ENCODE measurements at regions of chr12 and their contacts with region 1.

Region 1: GRCh38 chr12:89648211-89648930 is 60.3 kb downstream of the ATP2B1 start:
- DNase-seq: no peak
- ATAC-seq: no peak
- H3K4me3 Mint-ChIP-seq: no peak overlapping the region
- H3K27ac Mint-ChIP-seq: no peak overlapping the region
- H3K4me1 Mint-ChIP-seq: peaks cover 33% of the 10 kb centered on the region
- H3K27me3 Mint-ChIP-seq: no peaks in the 10 kb centered on the region

Region 2: DNA sequence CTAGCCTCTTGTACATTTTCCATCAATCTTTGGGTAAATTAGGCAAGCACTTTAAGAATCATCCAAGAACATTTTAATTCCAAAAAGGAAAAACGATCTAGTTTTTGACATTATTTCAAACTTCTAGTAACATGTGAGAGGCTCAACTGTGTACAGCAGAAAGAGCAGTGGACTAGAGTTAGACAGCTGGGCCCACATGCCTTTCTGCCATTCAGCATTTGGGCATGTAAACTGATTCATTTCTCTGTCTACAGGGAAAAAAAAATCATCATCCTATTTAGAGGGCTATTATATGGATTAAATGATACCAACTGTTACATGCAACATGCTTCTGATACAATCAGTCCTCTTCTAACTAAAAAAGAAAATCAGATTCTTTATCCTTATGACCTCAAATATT is 42.6 kb after region 1 on chr12:
- CTCF ChIA-PET with region 1: no interaction called
- POLR2A ChIA-PET with region 1: no interaction called
- intact Hi-C with region 1: no loop called
- DNase-seq: no peak
- ATAC-seq: no peak
- H3K4me3 Mint-ChIP-seq: no peak overlapping the region
- H3K27ac Mint-ChIP-seq: no peak overlapping the region
- H3K4me1 Mint-ChIP-seq: peaks cover 56% of the 10 kb centered on the region
- H3K27me3 Mint-ChIP-seq: no peaks in the 10 kb centered on the region

Region 3: DNA sequence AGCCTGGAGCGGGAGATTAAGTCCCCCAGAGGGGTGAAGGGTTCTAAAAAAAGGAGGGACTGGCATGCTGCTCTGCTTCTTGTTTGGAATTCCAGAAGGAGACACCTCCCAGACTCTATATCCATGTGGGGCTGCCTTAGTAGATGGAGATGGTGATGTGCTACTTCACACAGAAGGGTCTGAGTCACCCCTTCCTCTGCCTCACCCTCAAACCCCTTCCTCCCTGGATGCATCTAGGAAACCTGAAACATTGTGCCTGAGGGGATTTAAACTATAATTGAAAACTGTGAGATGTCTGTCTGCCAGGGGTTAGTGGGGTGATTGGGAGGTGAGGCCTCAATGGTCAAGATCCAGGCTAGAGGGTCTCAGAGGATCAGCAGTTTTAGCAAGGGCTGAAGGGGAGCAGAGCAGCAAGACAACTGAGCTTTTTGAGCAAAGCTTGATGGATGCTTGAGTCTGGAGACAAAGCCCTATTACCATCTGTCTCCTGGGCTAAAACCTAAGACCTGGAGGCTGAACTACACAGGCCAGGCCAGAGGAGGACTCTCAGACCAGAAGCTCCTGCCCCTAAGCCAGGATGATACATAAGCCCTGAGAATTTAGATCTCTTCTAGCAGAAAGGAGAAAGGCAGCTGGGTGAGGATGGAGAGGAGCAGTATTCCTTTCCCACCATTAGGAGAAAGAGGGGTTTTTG is 375.0 kb after region 1 on chr12:
- CTCF ChIA-PET with region 1: no interaction called
- POLR2A ChIA-PET with region 1: no interaction called
- intact Hi-C with region 1: no loop called
- DNase-seq: no peak
- ATAC-seq: no peak
- H3K4me3 Mint-ChIP-seq: no peak overlapping the region
- H3K27ac Mint-ChIP-seq: no peak overlapping the region
- H3K4me1 Mint-ChIP-seq: peaks cover 5% of the 10 kb centered on the region
- H3K27me3 Mint-ChIP-seq: no peaks in the 10 kb centered on the region

Region 4: GRCh38 chr12:91307957-91308670 is 1659.7 kb after region 1 on chr12:
- CTCF ChIA-PET with region 1: no interaction called
- POLR2A ChIA-PET with region 1: interaction called, 12 read pairs
- intact Hi-C with region 1: no loop called
- DNase-seq: no peak
- ATAC-seq: no peak
- H3K4me3 Mint-ChIP-seq: no peak overlapping the region
- H3K27ac Mint-ChIP-seq: no peak overlapping the region
- H3K4me1 Mint-ChIP-seq: no peaks in the 10 kb centered on the region
- H3K27me3 Mint-ChIP-seq: peaks cover 9% of the 10 kb centered on the region